ENCODE measurements at regions of chr11 and their contacts with region 1.

Region 1: GRCh38 chr11:123110356-123110755 is 48.4 kb upstream of the HSPA8 start:
- DNase-seq: no peak
- ATAC-seq: no peak
- H3K4me3 Mint-ChIP-seq: no peak overlapping the region
- H3K27ac Mint-ChIP-seq: peak overlapping the region; percentile 17
- H3K4me1 Mint-ChIP-seq: peaks cover 4% of the 10 kb centered on the region
- H3K27me3 Mint-ChIP-seq: peaks cover 13% of the 10 kb centered on the region

Region 2: DNA sequence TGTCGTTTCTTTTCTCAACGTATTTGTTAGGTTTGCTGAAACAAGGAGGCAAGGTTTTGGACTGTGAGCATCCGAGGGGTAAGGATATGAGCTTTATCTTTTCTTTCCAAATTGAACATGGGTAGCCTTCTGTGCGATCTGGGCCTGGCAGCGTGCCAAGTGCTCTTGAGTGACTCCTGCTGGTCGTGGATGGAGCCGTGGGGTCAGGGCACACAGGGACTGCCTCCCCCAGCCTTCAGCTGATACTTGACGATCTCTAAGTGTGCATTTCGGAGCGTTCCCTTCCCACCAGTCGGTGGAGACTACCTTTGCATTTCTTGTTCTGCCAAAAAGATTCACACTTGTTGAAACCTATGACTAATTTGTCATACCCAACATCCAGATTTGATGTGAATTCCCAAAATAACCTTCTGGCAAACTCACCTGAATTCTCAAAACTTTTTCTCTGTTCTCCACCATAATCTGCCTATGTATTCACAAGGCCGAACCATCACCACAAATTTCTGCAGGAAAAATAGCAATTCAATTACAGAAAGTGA is 124.8 kb after region 1 on chr11:
- CTCF ChIA-PET with region 1: interaction called, 13 read pairs
- POLR2A ChIA-PET with region 1: no interaction called
- DNase-seq: peak; percentile 46
- ATAC-seq: no peak
- H3K4me3 Mint-ChIP-seq: no peak overlapping the region
- H3K27ac Mint-ChIP-seq: peak overlapping the region; percentile 14
- H3K4me1 Mint-ChIP-seq: peaks cover 32% of the 10 kb centered on the region
- H3K27me3 Mint-ChIP-seq: peaks cover 9% of the 10 kb centered on the region